Dorsolateral prefrontal cortex (tissue), 120 donors: ENCODE measurements at regions of chr10 and their contacts with region 1.

Region 1: GRCh38 chr10:102917962-102918816 is at the start of gene CNNM2:
- DNase-seq: peak; percentile 99 to 100 (median 100)
- H3K4me3 ChIP-seq: peak within 1 kb of the TSS; percentile 66 to 99 (median 93)
- H3K27ac ChIP-seq: peak within 1 kb of the TSS; percentile 84 to 99 (median 97)
- H3K27me3 ChIP-seq: no peaks in the 10 kb centered on the region
- CTCF ChIP-seq: peak in 17 of 56 donors; percentile 2 to 49 (median 14)
- total RNA-seq, gene CNNM2: 25.2 to 40.5 (median 31.9) TPM

Region 2: DNA sequence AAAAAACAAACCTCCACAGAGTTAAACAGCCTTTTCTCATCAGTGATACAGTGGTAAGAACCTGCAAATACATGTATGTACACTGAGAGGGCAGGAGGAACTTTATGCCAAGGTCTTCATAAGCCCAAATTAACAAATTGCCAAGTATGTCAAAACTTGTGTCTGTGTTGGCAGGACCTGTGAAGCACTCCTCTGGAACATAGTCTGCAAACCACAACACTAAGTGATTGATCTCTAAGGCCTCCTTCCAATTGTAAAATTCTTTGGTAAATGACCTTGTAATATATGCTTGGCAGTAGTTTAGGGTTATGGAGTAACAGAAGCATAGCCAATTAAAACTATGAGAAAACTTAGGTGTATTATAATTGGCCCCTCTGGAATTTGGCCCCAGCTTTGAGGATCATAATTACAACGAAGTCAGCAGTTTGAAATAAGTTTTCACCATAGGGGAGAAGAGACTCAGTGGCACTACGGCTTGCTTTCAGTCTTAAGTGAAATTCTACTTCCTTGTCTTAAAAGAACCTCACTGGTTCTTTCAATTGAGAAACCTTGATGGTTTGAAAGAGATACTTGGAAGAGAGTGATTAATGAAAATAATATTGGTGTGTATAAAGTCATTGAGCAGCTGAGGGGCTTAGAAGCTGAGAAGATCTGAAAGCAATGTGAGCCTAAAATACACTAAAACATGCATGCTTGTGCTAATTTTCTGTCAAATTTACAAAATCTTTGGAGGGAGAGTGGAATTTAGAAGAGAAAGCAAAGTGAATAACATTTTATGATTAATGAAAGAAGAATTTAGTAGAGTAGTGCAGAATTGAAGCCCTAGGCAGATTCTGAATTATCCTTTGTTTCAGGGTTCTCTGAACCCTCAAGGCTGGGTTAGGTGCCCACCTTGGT is 57.5 kb after region 1 on chr10:
- intact Hi-C with region 1: no loop called
- DNase-seq: no peak
- H3K4me3 ChIP-seq: no peak overlapping the region
- H3K27ac ChIP-seq: peak overlapping the region in 2 of 59 donors; percentile 9 to 14
- H3K27me3 ChIP-seq: no peaks in the 10 kb centered on the region
- CTCF ChIP-seq: no peak

Region 3: DNA sequence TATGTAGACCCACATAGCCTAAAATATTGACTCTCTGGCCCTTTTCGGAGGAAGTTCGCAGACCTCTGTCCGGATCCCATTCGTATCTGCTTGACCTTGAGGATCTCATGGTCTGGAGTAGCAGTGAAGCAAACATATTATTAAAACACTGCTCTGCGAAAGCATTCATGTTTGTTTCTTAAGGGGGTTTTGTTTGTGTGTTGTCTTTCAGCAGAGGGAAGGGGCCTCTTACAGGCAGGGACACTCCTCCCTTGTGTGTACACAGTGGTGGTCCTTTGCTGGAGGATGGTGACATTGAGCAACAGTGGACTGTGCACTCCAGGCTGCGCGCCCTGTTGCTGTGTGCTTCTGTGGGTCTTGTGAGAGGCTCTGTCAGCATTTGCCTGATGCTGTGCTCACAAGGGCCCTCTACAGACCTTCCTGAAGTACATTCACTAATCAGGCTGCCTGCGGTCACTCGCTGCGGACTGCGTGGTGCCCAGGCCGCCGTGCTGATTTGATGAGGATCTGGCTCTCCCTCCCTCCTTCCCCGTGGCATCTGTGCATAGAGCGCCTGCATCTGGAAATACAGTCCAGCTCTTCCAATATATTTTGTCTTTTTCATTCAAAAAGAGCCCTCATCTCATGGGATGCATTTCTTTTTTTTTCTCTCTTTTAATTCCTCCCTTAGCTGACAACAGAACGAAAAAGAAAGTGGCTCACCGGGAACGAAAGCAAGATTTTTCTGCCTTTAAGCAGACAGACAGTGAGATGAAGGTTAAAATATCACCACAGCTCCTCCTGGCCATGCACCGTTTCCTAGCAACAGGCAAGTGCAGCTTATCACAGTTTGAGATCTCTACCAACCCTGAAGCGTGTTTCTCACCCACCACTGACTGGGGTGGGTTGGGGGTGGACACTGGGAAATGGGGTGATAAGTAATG is 135.7 kb after region 1 on chr10:
- intact Hi-C with region 1: loop called in 1 of 2 experiments (anchors 1 kb)
- DNase-seq: peak; percentile 34 to 83 (median 75)
- H3K4me3 ChIP-seq: peak overlapping the region in 56 of 59 donors; percentile 8 to 59 (median 38)
- H3K27ac ChIP-seq: peak overlapping the region in 54 of 59 donors; percentile 0 to 84 (median 54)
- H3K27me3 ChIP-seq: no peaks in the 10 kb centered on the region
- CTCF ChIP-seq: peak in 44 of 56 donors; percentile 9 to 55 (median 36)

Region 4: DNA sequence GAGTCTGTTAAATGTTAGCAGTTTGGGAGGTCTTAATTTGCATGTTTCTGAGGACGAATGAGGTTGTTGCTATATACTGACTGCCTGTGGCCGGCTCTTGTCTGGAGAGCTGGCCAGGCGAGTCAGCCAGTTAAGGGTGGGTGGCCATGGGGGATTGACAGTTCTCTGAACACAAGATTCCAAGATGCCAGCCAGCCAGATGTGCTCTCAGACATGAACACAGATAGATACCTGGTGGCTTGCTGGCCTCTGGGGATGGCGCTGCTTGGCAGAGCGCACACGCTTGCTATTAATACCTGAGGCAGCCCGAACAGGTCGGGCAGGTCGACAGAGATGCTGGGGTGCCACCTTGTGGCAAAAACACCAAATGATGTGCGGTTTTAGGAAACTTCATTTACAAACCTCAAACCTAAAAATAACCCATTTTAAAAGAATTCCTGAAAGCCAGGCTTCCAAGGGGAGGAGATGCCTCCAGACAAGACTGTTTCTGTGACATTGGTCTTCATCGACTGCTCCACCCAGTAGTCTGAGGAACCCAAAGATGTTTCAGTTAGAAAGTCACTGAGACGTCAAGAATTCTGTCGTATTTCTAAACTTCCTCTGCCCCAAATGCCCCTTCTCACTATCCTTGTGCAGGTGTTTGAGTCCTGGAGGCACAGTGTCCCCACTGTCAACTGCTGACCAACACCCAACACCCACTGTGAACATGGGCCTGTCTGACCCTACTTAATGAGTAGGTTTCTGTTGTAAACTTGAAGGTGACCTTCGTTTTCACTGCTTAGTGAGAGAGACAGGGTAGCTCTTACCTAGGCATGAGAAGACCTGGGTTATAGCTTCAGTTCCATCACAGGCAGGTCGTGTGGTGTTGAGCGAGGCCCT is 151.5 kb after region 1 on chr10:
- intact Hi-C with region 1: loop called (anchors 1 to 5 kb)
- DNase-seq: peak in 8 of 10 donors; percentile 60 to 77 (median 65)
- H3K4me3 ChIP-seq: peak overlapping the region in 1 of 59 donors; percentile 30
- H3K27ac ChIP-seq: peak overlapping the region in 11 of 59 donors; percentile 5 to 48 (median 25)
- H3K27me3 ChIP-seq: no peaks in the 10 kb centered on the region
- CTCF ChIP-seq: peak; percentile 33 to 80 (median 68)

Region 5: DNA sequence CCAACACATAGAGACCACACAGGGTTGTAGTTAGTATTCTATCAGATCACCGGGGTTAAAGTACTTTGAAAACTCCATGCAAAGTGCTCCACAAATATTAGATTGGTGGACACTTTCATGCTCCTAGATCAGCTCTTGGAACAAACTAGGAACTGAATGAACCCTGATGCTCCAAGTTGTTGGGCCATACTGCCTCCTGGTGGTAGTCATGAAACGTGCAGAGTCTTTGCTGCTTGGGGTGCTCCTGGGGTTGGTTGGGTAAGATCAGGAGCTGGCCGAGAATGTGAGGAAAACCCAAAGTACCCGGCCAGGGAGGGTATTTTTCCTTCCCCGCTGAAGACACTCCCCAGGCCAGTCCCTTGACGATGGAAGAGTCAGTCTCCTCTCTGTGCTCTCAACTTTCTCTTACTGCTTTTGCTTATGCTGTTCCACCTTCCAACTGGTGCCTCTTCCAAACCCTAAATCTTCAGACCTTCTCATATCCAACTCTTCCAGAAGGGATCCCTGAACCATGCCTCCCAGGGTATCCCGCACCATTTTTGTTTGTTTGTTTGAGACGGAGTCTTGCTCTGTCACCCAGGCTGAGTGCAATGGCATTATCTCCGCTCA is 326.6 kb after region 1 on chr10:
- intact Hi-C with region 1: loop called (anchors 1 to 2 kb)
- DNase-seq: peak; percentile 41 to 82 (median 70)
- H3K4me3 ChIP-seq: peak overlapping the region in 2 of 59 donors; percentile 6 to 31
- H3K27ac ChIP-seq: no peak overlapping the region
- H3K27me3 ChIP-seq: no peaks in the 10 kb centered on the region
- CTCF ChIP-seq: peak; percentile 52 to 96 (median 88)

Region 6: DNA sequence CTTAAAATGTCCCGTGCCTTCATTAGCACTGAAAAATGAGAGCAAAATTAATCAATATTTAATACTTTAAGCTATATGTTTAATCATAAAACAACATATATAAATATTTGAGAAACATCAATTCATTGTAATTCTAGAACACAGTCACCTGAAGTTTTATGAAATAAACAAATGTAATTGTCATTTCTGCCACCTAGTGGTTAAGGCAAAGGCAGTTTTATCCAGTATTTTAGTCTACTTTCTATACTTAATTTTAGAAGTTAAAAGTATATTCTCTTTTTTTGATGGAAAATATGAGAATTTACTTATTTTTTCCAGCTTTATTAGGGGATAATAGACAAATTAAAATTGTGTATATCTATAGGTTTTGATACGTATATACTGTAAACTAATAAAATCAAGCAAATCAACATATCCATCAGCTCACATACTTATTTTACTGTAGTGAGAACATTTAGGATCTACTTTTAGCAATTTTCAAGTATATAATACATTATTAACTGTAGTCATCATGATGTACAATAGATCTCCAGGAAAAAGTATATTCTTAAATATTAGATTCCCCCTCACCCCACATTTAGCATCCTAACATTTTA is 415.8 kb after region 1 on chr10:
- intact Hi-C with region 1: loop called (anchors 10 kb)
- DNase-seq: no peak
- H3K4me3 ChIP-seq: no peak overlapping the region
- H3K27ac ChIP-seq: no peak overlapping the region
- H3K27me3 ChIP-seq: no peaks in the 10 kb centered on the region
- CTCF ChIP-seq: peak; percentile 33 to 78 (median 65)